WTC11 (cell line): ENCODE measurements at regions of chr3 and their contacts with region 1.

Region 1: GRCh38 chr3:38117748-38118420 is 19.0 kb downstream of the ACAA1 start:
- DNase-seq: peak; percentile 74
- ATAC-seq: peak; percentile 82
- H3K4me3 Mint-ChIP-seq: no peak overlapping the region
- H3K27ac Mint-ChIP-seq: no peak overlapping the region
- H3K4me1 Mint-ChIP-seq: no peaks in the 10 kb centered on the region
- H3K27me3 Mint-ChIP-seq: peaks cover 6% of the 10 kb centered on the region
- CTCF ChIP-seq: peak; percentile 60

Region 2: DNA sequence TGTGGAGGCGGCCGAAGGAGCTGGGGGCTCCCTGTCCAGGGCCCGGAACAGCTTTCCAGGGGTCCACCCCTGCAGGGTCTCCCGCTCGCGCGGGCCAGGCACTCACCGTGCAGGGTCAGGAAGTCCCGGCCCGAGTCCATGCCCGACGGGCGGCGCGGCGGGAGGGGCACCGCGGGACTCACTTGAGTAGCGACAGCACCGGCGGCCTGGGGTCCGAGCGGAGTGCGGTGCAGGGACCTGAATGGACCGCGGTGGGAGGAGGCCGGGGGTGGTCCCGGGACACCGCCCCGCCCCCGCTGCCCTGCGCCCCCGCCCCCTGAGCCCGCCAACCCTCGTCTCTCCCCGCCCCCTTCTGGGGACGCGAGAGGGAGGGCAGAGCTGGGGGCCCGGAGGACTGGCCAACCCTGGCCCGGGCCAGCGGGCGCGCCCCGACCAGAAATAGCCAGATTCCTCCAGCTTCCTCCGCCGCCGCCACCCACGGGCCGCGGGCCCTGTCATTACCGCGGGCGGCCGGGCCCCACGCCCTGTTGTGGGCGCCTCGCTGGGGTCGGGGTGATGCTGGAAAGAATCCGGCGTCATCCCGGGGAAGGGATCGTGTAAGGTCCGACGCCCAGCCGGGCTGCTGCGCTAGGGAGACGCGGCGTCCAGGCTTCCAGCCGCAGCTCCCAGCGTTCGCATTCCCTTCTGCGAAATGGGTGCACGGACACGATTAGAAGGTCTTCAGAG is 88.3 kb before region 1 on chr3 and contains the start of gene PLCD1:
- CTCF ChIA-PET with region 1: interaction called, 10 read pairs
- POLR2A ChIA-PET with region 1: no interaction called
- DNase-seq: peak; percentile 82
- ATAC-seq: peak; percentile 23
- H3K4me3 Mint-ChIP-seq: peak within 1 kb of the TSS; percentile 75
- H3K27ac Mint-ChIP-seq: no peak within 1 kb of the TSS
- H3K4me1 Mint-ChIP-seq: peaks cover 12% of the 10 kb centered on the region
- H3K27me3 Mint-ChIP-seq: peaks cover 73% of the 10 kb centered on the region
- CTCF ChIP-seq: no peak
- total RNA-seq, gene PLCD1: 29.9 to 33.3 TPM (median 32.6 TPM) in 3 replicates

Region 3: GRCh38 chr3:38421679-38422336 is 303.9 kb after region 1 on chr3:
- CTCF ChIA-PET with region 1: no interaction called
- POLR2A ChIA-PET with region 1: no interaction called
- DNase-seq: no peak
- ATAC-seq: peak; percentile 71
- H3K4me3 Mint-ChIP-seq: peak overlapping the region; percentile 18; the same call in 1 of the 2 replicates
- H3K27ac Mint-ChIP-seq: peak overlapping the region; percentile 94
- H3K4me1 Mint-ChIP-seq: peaks cover 31% of the 10 kb centered on the region
- H3K27me3 Mint-ChIP-seq: no peaks in the 10 kb centered on the region
- CTCF ChIP-seq: no peak